ENCODE measurements at regions of chr9 and their contacts with region 1.

Region 1: DNA sequence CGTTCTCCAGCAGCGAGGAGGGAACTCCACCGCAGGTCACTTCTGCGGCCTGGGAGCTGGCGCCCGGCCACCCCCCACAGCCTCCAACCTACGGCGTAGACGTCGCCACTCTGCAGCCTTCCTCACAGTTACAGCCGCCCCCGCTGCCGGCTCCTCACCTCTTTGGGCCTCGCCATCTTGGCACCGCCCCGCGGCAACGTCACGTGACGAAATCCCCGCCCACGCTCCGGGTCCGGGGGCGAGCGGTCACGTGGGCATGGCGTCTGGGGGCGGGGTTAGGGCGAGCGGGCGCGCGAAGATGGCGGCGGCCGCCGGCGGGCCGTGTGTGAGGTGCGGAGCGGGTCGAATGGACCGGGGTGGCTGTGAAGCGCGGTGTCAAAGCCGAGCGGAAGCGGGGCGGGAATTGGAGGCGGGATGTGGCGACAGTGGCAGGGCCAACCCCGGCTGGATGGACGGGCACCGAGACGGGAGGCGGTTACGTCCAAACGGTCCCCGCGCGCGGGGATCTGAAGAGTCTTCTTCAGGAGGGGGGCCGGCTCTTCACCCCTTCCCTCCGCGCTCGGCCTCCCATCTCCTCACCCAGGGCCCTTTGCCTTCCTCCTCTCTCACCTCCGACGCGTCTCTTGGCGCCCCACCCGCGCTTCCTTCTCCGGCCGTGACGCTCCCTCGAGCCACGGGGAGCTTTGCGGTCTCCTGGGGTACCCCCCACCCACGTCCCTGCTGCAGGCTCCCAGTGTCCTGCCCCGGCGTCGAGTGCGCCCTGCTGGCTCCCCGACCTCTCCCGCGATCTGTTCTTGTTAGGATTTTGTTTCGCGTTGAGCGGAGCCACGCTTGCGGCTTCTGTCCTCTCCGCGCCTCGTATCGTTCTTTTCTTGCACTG is at the starts of genes DOLK and NUP188:
- DNase-seq: peak; percentile 96 to 100 (median 98)
- ATAC-seq: peak; percentile 95
- H3K4me3 ChIP-seq: peak within 1 kb of the TSS; percentile 87
- H3K4me3 Mint-ChIP-seq: peak within 1 kb of the TSS; percentile 93 to 99 (median 98)
- H3K27ac ChIP-seq: peak within 1 kb of the TSS; percentile 97
- H3K27ac Mint-ChIP-seq: peak within 1 kb of the TSS; percentile 89 to 99 (median 97)
- H3K4me1 ChIP-seq: peaks cover 8 to 14% of the 10 kb centered on the region in 2 donors
- H3K4me1 Mint-ChIP-seq: peaks cover 16 to 49% (median 32%) of the 10 kb centered on the region in 7 donors
- H3K27me3 ChIP-seq: no peaks in the 10 kb centered on the region
- H3K27me3 Mint-ChIP-seq: no peaks in the 10 kb centered on the region
- total RNA-seq, gene DOLK: 6.0 to 12.8 (median 9.5) TPM
- total RNA-seq, gene NUP188: 55.7 to 98.7 (median 63.7) TPM

Region 2: DNA sequence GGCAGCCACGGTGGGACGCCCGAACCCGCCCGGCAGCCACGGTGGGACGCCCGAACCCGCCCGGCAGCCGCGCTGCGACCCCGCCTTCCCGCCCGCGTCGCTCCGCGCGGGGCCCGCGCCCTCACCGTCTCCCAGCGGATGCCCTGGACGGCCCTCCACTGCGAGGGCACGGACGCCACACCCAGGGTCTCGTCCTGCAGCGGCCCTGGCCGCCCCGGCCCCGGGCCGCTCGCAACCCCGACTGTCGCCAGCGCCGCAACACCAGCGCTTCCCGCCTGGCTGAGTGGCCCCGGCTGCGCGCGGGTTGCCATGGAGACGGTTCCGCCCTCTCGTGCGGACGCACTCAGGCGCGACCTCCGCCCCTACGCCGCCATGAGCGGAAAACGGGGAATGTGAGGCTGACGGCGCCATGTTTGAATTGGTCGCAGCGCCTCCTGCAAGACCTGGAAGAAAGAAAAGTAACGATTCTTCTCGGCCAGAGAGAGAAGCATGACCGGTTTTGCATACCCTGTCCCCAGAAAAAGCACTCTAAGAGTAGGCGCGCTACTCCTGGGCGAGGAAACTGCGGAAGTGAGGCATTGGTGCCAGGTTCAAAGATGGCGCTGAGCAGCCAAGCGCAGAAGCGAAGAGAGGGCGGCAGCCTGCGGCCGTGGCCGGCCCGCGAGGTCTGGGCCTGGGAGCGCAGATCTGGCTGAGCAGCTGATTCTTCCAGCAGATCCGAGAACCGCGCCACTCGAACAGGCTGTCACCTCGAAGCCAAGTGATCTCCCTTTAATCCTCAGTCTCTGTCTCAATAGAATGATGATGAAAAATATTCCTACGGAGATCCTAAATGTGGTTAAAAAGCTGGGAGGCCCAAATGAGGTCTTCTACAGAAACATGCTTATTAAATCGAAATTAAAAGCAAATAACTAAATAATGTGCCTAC is 291.0 kb before region 1 on chr9 and contains the start of gene DYNC2I2:
- CTCF ChIA-PET with region 1: no interaction called
- POLR2A ChIA-PET with region 1: no interaction called
- intact Hi-C with region 1: loop called in 1 of 2 experiments (anchors 1 kb)
- DNase-seq: peak; percentile 91 to 96 (median 96)
- ATAC-seq: peak; percentile 98
- H3K4me3 ChIP-seq: peak within 1 kb of the TSS; percentile 96
- H3K4me3 Mint-ChIP-seq: peak within 1 kb of the TSS; percentile 88 to 98 (median 94)
- H3K27ac ChIP-seq: peak within 1 kb of the TSS; percentile 99
- H3K27ac Mint-ChIP-seq: peak within 1 kb of the TSS; percentile 95 to 100 (median 99)
- H3K4me1 ChIP-seq: peaks cover 3 to 9% of the 10 kb centered on the region in 2 donors
- H3K4me1 Mint-ChIP-seq: peaks cover 0 to 14% (median 7%) of the 10 kb centered on the region in 7 donors
- H3K27me3 ChIP-seq: no peaks in the 10 kb centered on the region
- H3K27me3 Mint-ChIP-seq: no peaks in the 10 kb centered on the region
- total RNA-seq, gene DYNC2I2: 2.5 to 41.7 (median 3.8) TPM

Region 3: DNA sequence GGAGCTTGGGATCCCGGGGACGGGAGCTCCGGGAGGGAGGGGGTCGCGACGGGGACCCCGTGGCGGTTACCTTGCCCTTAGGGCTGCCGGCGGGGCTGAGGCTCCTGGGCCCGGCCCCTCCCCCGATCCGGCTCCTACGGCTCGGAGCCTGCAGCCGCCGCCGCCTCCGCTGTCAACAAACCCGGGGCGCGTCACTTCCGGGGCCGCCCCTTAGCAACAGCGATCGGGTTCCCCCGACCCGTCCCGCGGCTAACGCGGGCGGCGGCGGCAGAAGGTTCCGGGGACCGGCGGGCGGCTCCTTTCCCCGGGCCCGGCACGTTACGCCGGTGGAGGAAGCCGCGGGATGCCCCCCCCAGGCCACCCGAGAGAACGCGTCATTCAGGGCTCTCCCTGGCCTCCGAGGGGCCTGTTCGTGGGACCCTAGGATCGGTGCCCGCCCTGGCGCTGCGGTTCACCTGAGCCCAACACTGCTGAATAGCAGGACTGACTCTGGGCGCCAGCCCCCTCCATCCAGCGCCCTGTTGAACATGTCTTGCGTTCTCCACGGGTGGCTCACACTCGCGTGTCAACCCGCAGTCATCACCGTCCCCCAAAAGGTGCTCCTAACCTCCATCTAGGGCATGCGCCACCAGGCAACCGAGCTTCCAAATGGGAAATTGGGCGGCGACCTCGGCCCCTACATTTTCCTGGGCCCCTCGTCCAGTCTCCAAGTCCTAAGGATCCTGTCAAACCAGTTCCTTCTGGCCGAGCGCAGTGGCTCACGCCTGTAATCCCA is 175.7 kb before region 1 on chr9 and contains the start of gene ZER1:
- CTCF ChIA-PET with region 1: no interaction called
- POLR2A ChIA-PET with region 1: interaction called, 7 read pairs
- intact Hi-C with region 1: loop called in 1 of 2 experiments (anchors 1 kb)
- DNase-seq: peak; percentile 92 to 98 (median 95)
- ATAC-seq: peak; percentile 97
- H3K4me3 ChIP-seq: peak within 1 kb of the TSS; percentile 97
- H3K4me3 Mint-ChIP-seq: peak within 1 kb of the TSS; percentile 95 to 99 (median 98)
- H3K27ac ChIP-seq: peak within 1 kb of the TSS; percentile 93
- H3K27ac Mint-ChIP-seq: peak within 1 kb of the TSS; percentile 93 to 100 (median 100)
- H3K4me1 ChIP-seq: peaks cover 7 to 12% of the 10 kb centered on the region in 2 donors
- H3K4me1 Mint-ChIP-seq: peaks cover 21 to 40% (median 39%) of the 10 kb centered on the region in 7 donors
- H3K27me3 ChIP-seq: no peaks in the 10 kb centered on the region
- H3K27me3 Mint-ChIP-seq: no peaks in the 10 kb centered on the region
- total RNA-seq, gene ZER1: 22.7 to 51.2 (median 34.7) TPM

Region 4: DNA sequence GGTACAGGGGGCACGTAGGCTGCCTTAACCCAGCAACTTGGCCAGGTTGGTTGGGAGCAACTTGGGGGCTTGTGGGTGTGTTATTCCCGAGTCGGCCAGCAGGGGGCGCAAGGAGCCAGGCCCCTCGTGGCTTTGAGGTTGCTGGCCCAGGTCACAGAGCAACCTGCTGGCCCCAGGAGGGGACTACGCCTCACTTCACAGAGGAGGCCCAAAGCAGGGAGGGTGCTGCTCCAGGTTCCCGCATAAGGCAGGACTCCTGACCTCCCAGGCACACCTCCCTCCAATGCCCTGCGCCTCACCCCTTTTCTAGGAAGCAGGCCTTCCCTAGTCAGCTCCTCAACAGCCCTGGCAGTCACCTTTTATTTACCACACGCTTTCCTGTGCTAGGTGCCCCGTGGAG is 84.0 kb before region 1 on chr9:
- CTCF ChIA-PET with region 1: no interaction called
- POLR2A ChIA-PET with region 1: no interaction called
- intact Hi-C with region 1: loop called in 1 of 2 experiments (anchors 5 kb)
- DNase-seq: peak; percentile 69 to 89 (median 79)
- ATAC-seq: peak; percentile 99
- H3K4me3 ChIP-seq: no peak overlapping the region
- H3K4me3 Mint-ChIP-seq: no peak overlapping the region
- H3K27ac ChIP-seq: no peak overlapping the region
- H3K27ac Mint-ChIP-seq: peak overlapping the region; percentile 11 to 78 (median 55)
- H3K4me1 ChIP-seq: peaks cover 3 to 7% of the 10 kb centered on the region in 2 donors
- H3K4me1 Mint-ChIP-seq: peaks cover 0 to 10% (median 6%) of the 10 kb centered on the region in 7 donors
- H3K27me3 ChIP-seq: no peaks in the 10 kb centered on the region
- H3K27me3 Mint-ChIP-seq: no peaks in the 10 kb centered on the region

Region 5: DNA sequence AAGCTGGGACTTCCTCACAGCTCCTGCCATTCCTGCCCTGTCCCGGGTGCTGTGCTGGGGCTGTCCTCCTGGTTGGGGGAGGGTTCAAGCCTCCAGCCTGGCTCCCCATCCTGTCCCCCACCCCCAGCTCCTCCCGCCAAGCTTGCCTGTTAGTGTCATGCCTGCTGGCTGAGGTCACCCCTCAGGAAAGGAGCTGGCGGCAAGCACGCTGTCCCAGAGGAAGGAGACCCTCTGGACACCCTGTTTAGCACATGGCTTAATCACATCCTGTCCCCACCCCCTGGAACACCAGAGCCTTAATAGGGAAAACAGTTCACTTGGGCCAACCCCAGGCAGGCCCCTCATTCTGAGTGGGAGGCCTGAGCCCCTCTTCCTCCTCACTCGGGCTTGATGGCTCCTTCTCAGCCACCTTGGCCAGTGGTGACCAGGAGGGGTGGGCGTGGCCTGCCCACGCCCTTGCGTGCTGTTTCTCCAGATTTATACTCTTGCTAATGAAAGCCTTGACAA is 36.1 kb before region 1 on chr9:
- CTCF ChIA-PET with region 1: no interaction called
- POLR2A ChIA-PET with region 1: no interaction called
- intact Hi-C with region 1: no loop called
- DNase-seq: no peak
- ATAC-seq: no peak
- H3K4me3 ChIP-seq: no peak overlapping the region
- H3K4me3 Mint-ChIP-seq: peak overlapping the region in 5 of 10 donors; percentile 12 to 80 (median 25)
- H3K27ac ChIP-seq: peak overlapping the region; percentile 10
- H3K27ac Mint-ChIP-seq: peak overlapping the region in 8 of 9 donors; percentile 38 to 85 (median 78)
- H3K4me1 ChIP-seq: peaks cover 5 to 42% of the 10 kb centered on the region in 2 donors
- H3K4me1 Mint-ChIP-seq: peaks cover 32 to 67% (median 48%) of the 10 kb centered on the region in 7 donors
- H3K27me3 ChIP-seq: no peaks in the 10 kb centered on the region
- H3K27me3 Mint-ChIP-seq: no peaks in the 10 kb centered on the region

Region 6: DNA sequence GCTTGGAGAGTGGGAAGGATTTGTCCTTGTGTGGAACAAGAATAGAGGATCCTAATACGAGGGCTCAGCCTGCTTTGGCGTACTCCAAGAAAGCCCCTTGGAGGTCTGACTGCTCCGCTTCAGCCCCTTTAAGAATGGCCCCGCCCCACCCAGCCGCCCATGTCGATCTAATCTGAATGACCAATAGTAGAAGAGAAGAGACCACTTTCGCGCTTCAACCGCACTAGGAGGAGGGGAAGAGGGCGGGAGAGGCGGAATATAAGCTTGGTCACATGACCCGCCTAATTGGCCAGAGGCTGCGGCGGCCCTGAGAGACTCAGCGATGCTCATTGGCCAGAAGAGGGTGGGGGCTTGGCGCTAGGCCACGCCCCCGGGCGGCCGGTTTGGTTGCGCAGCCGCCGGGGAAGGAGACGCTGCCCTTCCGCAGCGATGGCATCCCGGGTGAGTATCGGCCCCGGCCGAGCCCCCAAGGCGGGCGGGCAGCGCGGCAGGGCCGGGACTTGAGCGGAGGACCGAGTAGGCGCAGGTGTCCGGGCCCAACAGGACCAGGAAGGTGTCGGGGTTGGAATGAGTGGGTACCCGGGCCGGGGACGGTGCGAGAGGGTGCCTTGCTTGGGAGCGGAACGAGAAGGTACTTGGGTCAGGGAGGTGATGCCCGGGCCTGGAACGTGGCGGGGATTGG is 88.7 kb after region 1 on chr9 and contains the start of gene MIGA2:
- CTCF ChIA-PET with region 1: no interaction called
- POLR2A ChIA-PET with region 1: interaction called, 3 read pairs
- intact Hi-C with region 1: loop called in 1 of 2 experiments (anchors 1 kb)
- DNase-seq: peak; percentile 78 to 93 (median 90)
- ATAC-seq: peak; percentile 99
- H3K4me3 ChIP-seq: peak within 1 kb of the TSS; percentile 87
- H3K4me3 Mint-ChIP-seq: peak within 1 kb of the TSS; percentile 90 to 99 (median 94)
- H3K27ac ChIP-seq: peak within 1 kb of the TSS; percentile 72
- H3K27ac Mint-ChIP-seq: peak within 1 kb of the TSS; percentile 56 to 93 (median 87)
- H3K4me1 ChIP-seq: peaks cover 13 to 17% of the 10 kb centered on the region in 2 donors
- H3K4me1 Mint-ChIP-seq: peaks cover 22 to 41% (median 37%) of the 10 kb centered on the region in 7 donors
- H3K27me3 ChIP-seq: no peaks in the 10 kb centered on the region
- H3K27me3 Mint-ChIP-seq: no peaks in the 10 kb centered on the region
- total RNA-seq, gene MIGA2: 50.0 to 73.4 (median 60.7) TPM